ENCODE measurements at regions of chr3 and their contacts with region 1.

Region 1: GRCh38 chr3:150439657-150440056 is 31.6 kb downstream of the TSC22D2 start:
- DNase-seq: no peak
- ATAC-seq: no peak
- H3K4me3 ChIP-seq: no peak overlapping the region
- H3K27ac ChIP-seq: no peak overlapping the region
- H3K4me1 ChIP-seq: no peaks in the 10 kb centered on the region
- H3K27me3 ChIP-seq: no peaks in the 10 kb centered on the region

Region 2: DNA sequence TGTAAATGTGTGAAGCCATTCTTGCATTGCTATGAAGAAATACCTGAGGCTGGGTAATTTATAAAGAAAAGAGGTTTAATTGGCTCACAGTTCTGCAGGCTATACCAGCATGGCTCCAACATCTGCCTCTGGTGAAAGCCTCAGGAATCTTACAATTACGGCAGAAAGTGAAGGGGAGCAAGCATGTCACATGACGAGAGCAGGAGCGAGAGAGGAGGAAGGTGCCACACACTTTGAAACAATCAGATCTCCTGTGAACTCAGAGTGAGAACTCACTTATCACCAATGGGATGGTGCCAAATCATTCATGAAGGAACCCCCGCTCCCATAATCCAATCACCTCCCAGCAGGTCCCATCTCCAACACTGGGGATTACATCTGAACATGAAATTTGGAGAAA is 245.1 kb before region 1 on chr3:
- intact Hi-C with region 1: no loop called
- DNase-seq: no peak
- ATAC-seq: no peak
- H3K4me3 ChIP-seq: no peak overlapping the region
- H3K27ac ChIP-seq: no peak overlapping the region
- H3K4me1 ChIP-seq: no peaks in the 10 kb centered on the region
- H3K27me3 ChIP-seq: no peaks in the 10 kb centered on the region

Region 3: GRCh38 chr3:150421799-150422548 is 17.7 kb before region 1 on chr3:
- intact Hi-C with region 1: no loop called
- DNase-seq: no peak
- ATAC-seq: no peak
- H3K4me3 ChIP-seq: no peak overlapping the region
- H3K27ac ChIP-seq: no peak overlapping the region
- H3K4me1 ChIP-seq: no peaks in the 10 kb centered on the region
- H3K27me3 ChIP-seq: no peaks in the 10 kb centered on the region

Region 4: GRCh38 chr3:150480877-150481276 is 41.2 kb after region 1 on chr3:
- intact Hi-C with region 1: loop called in 1 of 4 experiments (anchors 5 kb)
- DNase-seq: no peak
- ATAC-seq: no peak
- H3K4me3 ChIP-seq: no peak overlapping the region
- H3K27ac ChIP-seq: no peak overlapping the region
- H3K4me1 ChIP-seq: no peaks in the 10 kb centered on the region
- H3K27me3 ChIP-seq: no peaks in the 10 kb centered on the region